Activated CD4-positive, alpha-beta memory T cell treated with anti-CD3 and anti-CD28 coated beads for 36 hours (primary cell): ENCODE measurements at regions of chr14 and their contacts with region 1.

Region 1: GRCh38 chr14:35416108-35416750 is 11.7 kb upstream of the NFKBIA start:
- DNase-seq: peak; percentile 89
- H3K4me3 Mint-ChIP-seq: peak overlapping the region; percentile 70
- H3K27ac Mint-ChIP-seq: peak overlapping the region; percentile 92
- H3K4me1 Mint-ChIP-seq: peaks cover 41% of the 10 kb centered on the region
- H3K27me3 Mint-ChIP-seq: no peaks in the 10 kb centered on the region

Region 2: DNA sequence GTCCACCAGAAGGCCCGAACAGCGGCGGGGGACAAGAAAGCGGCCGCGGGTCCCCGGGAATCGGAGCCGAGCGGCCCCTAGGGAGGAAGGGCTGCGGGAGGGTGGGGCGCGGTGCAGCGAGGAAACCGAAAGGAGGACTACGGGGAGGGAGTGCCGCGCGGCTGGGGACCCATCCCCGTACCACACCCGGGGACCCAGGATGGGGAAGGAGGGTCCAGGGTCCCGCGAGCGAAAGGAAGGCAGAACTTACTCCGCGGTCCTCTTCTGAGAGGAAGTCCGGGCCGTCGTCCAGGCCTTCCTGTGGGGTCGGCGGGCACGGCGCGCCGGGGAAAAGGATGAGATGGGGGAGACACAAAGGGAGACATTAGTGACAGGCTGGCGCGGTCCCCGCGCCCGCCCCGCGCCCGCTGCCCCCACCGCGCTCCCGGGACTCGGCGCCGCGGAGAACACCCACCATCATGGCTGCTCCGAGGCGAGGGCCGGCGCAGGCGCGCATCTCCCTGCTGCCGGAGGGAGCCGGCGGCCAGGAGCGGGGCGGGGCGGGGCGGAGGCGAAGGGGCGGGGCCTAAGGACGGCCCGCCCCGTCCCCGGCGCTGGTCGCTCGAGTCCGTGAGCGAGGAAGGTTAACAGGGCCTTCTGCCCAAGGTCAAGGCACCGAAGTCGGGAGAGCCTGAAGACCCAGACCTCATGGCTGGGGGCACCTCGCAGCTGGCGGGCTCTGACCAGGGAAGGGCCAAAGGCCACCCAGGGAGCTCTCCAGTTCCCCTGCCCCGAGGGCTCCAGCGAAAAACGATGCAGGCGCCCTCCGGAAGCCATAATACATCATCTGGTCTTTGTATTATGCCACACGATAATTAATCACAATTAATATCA is 786.3 kb before region 1 on chr14 and contains the start of gene SNX6:
- CTCF ChIA-PET with region 1: no interaction called
- POLR2A ChIA-PET with region 1: no interaction called
- intact Hi-C with region 1: loop called (anchors 2 kb)
- DNase-seq: peak; percentile 89
- H3K4me3 Mint-ChIP-seq: peak within 1 kb of the TSS; percentile 90
- H3K27ac Mint-ChIP-seq: peak within 1 kb of the TSS; percentile 87
- H3K4me1 Mint-ChIP-seq: peaks cover 29% of the 10 kb centered on the region
- H3K27me3 Mint-ChIP-seq: peaks cover 2% of the 10 kb centered on the region
- total RNA-seq, gene SNX6: 82.0 to 86.9 TPM

Region 3: GRCh38 chr14:34714320-34715126 is 701.7 kb before region 1 on chr14 and contains the start of gene CFL2:
- CTCF ChIA-PET with region 1: no interaction called
- POLR2A ChIA-PET with region 1: interaction called, 4 read pairs
- intact Hi-C with region 1: loop called (anchors 2 kb)
- DNase-seq: peak; percentile 79
- H3K4me3 Mint-ChIP-seq: peak within 1 kb of the TSS; percentile 94
- H3K27ac Mint-ChIP-seq: peak within 1 kb of the TSS; percentile 89
- H3K4me1 Mint-ChIP-seq: peaks cover 24% of the 10 kb centered on the region
- H3K27me3 Mint-ChIP-seq: peaks cover 1% of the 10 kb centered on the region
- total RNA-seq, gene CFL2: 7.6 to 8.8 TPM

Region 4: GRCh38 chr14:34982417-34983147 is 433.6 kb before region 1 on chr14 and contains the start of gene SRP54:
- CTCF ChIA-PET with region 1: interaction called, 5 read pairs
- POLR2A ChIA-PET with region 1: interaction called, 11 read pairs
- intact Hi-C with region 1: loop called (anchors 2 kb)
- DNase-seq: peak; percentile 100
- H3K4me3 Mint-ChIP-seq: no peak within 1 kb of the TSS
- H3K27ac Mint-ChIP-seq: no peak within 1 kb of the TSS
- H3K4me1 Mint-ChIP-seq: peaks cover 23% of the 10 kb centered on the region
- H3K27me3 Mint-ChIP-seq: no peaks in the 10 kb centered on the region
- total RNA-seq, gene SRP54: 82.6 to 87.7 TPM

Region 5: DNA sequence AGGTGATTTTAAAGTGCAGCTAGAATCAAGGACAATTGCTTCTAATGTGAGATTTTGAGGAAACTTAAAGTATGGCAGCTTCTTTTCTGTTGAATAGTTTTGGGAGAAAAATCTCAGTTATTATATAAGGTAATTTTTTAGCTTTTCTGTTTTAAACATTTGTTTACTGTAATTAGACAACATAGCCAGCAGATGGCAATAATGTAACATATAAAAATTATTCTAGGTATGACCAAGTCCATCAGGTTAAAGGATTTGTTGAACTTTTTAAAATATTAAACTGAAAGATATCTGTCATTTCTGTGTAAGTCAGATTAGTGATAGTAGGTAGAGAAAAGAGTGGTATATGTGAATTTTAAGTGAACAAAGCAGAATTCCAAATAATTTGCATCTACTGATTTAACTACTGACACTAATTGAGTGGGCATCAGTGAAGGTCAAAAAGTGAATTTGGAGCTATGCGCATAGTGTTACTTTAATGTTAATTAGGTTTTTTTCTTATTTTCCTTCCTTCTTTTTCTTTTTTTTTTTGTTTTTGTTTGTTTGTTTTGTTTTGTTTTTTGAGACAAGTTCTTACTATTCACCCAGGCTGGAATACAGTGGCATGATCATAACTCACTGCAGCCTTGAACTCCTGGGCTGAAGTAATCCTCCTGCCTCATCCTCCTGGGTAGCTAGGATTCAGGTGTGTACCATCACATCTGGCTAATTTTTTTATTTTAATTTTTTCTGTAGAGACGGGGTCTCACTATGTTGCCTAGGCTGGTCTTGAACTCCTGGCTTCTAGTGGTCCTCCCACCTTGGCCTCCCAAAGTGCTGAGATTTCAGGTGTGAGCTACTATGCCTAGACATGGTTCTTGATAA is 275.3 kb before region 1 on chr14:
- CTCF ChIA-PET with region 1: interaction called, 42 read pairs
- POLR2A ChIA-PET with region 1: no interaction called
- intact Hi-C with region 1: no loop called
- DNase-seq: no peak
- H3K4me3 Mint-ChIP-seq: no peak overlapping the region
- H3K27ac Mint-ChIP-seq: no peak overlapping the region
- H3K4me1 Mint-ChIP-seq: peaks cover 17% of the 10 kb centered on the region
- H3K27me3 Mint-ChIP-seq: no peaks in the 10 kb centered on the region

Region 6: DNA sequence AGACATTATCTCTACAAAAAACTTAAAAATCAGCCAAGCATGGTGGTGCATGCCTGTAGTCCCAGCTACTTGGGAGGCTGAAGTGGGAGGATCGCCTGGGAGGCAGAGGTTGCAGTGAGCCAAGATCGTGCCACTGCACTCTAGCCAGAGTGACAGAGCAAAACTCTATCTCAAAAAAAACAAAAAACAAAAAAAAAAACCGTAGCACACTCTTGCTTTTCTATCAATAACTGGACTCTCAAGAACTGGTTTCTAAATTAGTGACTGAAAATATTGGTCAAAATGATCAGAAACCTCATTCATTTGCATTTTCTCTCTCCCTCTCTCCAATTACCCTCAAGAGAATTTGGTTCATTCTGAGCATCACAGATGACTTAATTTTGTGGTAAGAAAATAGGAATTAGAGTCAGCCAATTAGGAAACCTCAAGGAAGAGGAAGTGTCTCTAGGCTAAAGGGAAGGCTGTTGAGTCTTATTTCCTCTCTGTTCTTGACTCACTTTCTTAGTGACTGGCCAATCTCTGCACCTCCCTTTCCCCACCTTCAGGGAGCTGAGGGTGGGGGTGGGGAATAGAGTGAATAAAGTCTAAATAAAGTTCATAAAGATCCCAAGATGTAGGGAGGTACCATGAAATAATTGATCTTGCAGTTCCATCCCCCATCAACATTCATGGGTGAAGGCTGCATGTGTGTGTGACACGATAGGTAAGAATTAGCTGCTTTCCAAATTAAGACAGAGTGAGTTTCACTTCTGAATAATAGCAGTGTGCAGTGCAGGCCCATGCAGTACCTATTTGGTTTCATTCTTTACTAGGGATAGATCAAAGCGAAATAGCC is 130.8 kb before region 1 on chr14:
- CTCF ChIA-PET with region 1: interaction called, 11 read pairs
- POLR2A ChIA-PET with region 1: interaction called, 23 read pairs
- intact Hi-C with region 1: loop called (anchors 1 kb)
- DNase-seq: peak; percentile 35
- H3K4me3 Mint-ChIP-seq: peak overlapping the region; percentile 48
- H3K27ac Mint-ChIP-seq: peak overlapping the region; percentile 96
- H3K4me1 Mint-ChIP-seq: peaks cover 50% of the 10 kb centered on the region
- H3K27me3 Mint-ChIP-seq: no peaks in the 10 kb centered on the region

Region 7: GRCh38 chr14:35669805-35670204 is 253.6 kb after region 1 on chr14:
- CTCF ChIA-PET with region 1: no interaction called
- POLR2A ChIA-PET with region 1: no interaction called
- intact Hi-C with region 1: no loop called
- DNase-seq: no peak
- H3K4me3 Mint-ChIP-seq: no peak overlapping the region
- H3K27ac Mint-ChIP-seq: no peak overlapping the region
- H3K4me1 Mint-ChIP-seq: no peaks in the 10 kb centered on the region
- H3K27me3 Mint-ChIP-seq: no peaks in the 10 kb centered on the region

Region 8: GRCh38 chr14:35808076-35808652 is 391.9 kb after region 1 on chr14:
- CTCF ChIA-PET with region 1: no interaction called
- POLR2A ChIA-PET with region 1: no interaction called
- intact Hi-C with region 1: loop called (anchors 2 kb)
- DNase-seq: peak; percentile 48
- H3K4me3 Mint-ChIP-seq: peak overlapping the region; percentile 99
- H3K27ac Mint-ChIP-seq: peak overlapping the region; percentile 91
- H3K4me1 Mint-ChIP-seq: peaks cover 20% of the 10 kb centered on the region
- H3K27me3 Mint-ChIP-seq: no peaks in the 10 kb centered on the region